GM13977 (cell line): ENCODE measurements at regions of chr12 and their contacts with region 1.

Region 1: GRCh38 chr12:119412811-119413794 is 78.6 kb downstream of the CCDC60 start:
- DNase-seq: peak; percentile 58
- CTCF ChIP-seq: peak; percentile 83

Region 2: DNA sequence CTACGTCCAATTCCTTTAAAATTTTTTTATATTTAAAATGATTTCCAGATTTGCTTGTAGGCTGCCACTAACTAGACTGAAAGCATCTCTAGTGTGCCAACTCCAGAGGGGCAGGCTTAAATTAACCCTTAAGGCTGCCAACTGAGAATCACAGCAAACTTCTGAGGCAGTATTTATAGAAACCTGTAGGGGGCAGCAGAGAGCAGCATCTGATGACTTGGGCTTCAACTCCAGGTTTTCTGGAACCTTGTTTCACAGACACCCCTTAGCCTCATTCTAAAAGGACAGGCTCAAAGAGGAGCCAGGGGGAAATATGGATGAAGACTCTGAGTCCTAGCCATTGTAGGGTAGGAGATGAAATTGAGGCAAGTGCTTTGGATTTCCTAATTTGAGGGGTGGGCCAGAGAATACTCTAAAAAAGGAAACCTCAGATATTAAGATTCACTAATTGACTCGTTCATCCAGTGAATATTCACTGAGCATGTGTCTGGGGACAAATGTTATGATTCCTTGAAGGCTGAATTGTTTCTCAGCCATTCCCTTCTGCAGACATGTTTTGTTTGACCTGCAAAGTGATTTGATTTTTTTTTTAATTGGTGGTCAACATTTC is 297.7 kb before region 1 on chr12:
- in situ Hi-C with region 1: loop called (anchors 25 kb)
- DNase-seq: peak; percentile 66
- CTCF ChIP-seq: peak; percentile 71

Region 3: GRCh38 chr12:119198421-119198820 is 214.7 kb before region 1 on chr12:
- in situ Hi-C with region 1: no loop called
- DNase-seq: no peak
- CTCF ChIP-seq: no peak

Region 4: GRCh38 chr12:119211884-119212283 is 201.2 kb before region 1 on chr12:
- in situ Hi-C with region 1: no loop called
- DNase-seq: no peak
- CTCF ChIP-seq: no peak